ENCODE measurements at regions of chr1 and their contacts with region 1.

Region 1: GRCh38 chr1:184036517-184036949 is 995 bp downstream of the COLGALT2 start:
- DNase-seq: peak; percentile 83
- H3K4me3 ChIP-seq: peak overlapping the region; percentile 74
- H3K27ac ChIP-seq: peak overlapping the region; percentile 90
- H3K4me1 ChIP-seq: peaks cover 33% of the 10 kb centered on the region
- H3K27me3 ChIP-seq: no peaks in the 10 kb centered on the region
- CTCF ChIP-seq: no peak

Region 2: GRCh38 chr1:183635606-183636333 is 400.8 kb before region 1 on chr1 and contains the start of gene ARPC5:
- CTCF ChIA-PET with region 1: interaction called, 3 read pairs
- POLR2A ChIA-PET with region 1: no interaction called
- intact Hi-C with region 1: loop called (anchors 5 kb)
- DNase-seq: peak; percentile 99
- H3K4me3 ChIP-seq: peak within 1 kb of the TSS; percentile 76
- H3K27ac ChIP-seq: peak within 1 kb of the TSS; percentile 88
- H3K4me1 ChIP-seq: peaks cover 25% of the 10 kb centered on the region
- H3K27me3 ChIP-seq: no peaks in the 10 kb centered on the region
- CTCF ChIP-seq: no peak
- total RNA-seq, gene ARPC5: 138 and 158 TPM in 2 replicates